Naive thymus-derived CD4-positive, alpha-beta T cell (primary cell): ENCODE measurements at regions of chr2 and their contacts with region 1.

Region 1: GRCh38 chr2:181715033-181715630 is 34.8 kb upstream of the NEUROD1 start:
- DNase-seq: peak; percentile 30 to 78 (median 64)
- ATAC-seq: peak; percentile 90
- H3K4me3 ChIP-seq: no peak overlapping the region
- H3K4me3 Mint-ChIP-seq: no peak overlapping the region
- H3K27ac ChIP-seq: no peak overlapping the region
- H3K27ac Mint-ChIP-seq: no peak overlapping the region
- H3K4me1 ChIP-seq: no peaks in the 10 kb centered on the region
- H3K4me1 Mint-ChIP-seq: no peaks in the 10 kb centered on the region
- H3K27me3 ChIP-seq: no peaks in the 10 kb centered on the region
- H3K27me3 Mint-ChIP-seq: peaks cover 0 to 11% (median 0%) of the 10 kb centered on the region in 5 donors

Region 2: GRCh38 chr2:180125245-180125962 is 1589.7 kb before region 1 on chr2:
- CTCF ChIA-PET with region 1: interaction called, 3 read pairs
- POLR2A ChIA-PET with region 1: no interaction called
- intact Hi-C with region 1: loop called (anchors 1 to 2 kb)
- DNase-seq: peak in 7 of 9 donors; percentile 18 to 43 (median 27)
- ATAC-seq: peak; percentile 86
- H3K4me3 ChIP-seq: no peak overlapping the region
- H3K4me3 Mint-ChIP-seq: peak overlapping the region in 4 of 10 donors; percentile 4 to 58 (median 24)
- H3K27ac ChIP-seq: no peak overlapping the region
- H3K27ac Mint-ChIP-seq: no peak overlapping the region
- H3K4me1 ChIP-seq: no peaks in the 10 kb centered on the region
- H3K4me1 Mint-ChIP-seq: peaks cover 0 to 6% (median 3%) of the 10 kb centered on the region in 7 donors
- H3K27me3 ChIP-seq: no peaks in the 10 kb centered on the region
- H3K27me3 Mint-ChIP-seq: peaks cover 0 to 26% (median 13%) of the 10 kb centered on the region in 5 donors

Region 3: DNA sequence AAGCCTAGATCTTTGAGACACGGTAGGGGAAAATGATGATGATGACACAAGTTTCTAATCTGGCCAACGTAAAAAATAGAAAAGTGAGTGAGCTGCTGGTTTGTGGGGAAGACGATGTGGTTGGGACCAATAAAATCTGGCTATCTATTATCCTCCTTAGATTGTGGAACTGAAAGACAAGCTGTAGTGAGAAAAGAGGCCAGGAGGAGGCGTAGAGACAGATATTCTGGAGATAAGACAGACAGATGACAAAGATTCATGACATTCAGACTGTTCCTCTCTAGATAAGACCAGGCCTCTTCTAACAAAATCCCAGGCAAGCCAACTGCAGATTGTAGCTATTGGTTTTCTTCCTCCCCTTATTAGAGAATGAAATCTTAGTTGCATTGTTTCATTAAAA is 1111.1 kb before region 1 on chr2:
- CTCF ChIA-PET with region 1: no interaction called
- POLR2A ChIA-PET with region 1: no interaction called
- intact Hi-C with region 1: loop called (anchors 5 to 10 kb)
- DNase-seq: no peak
- ATAC-seq: peak; percentile 34
- H3K4me3 ChIP-seq: no peak overlapping the region
- H3K4me3 Mint-ChIP-seq: no peak overlapping the region
- H3K27ac ChIP-seq: no peak overlapping the region
- H3K27ac Mint-ChIP-seq: no peak overlapping the region
- H3K4me1 ChIP-seq: no peaks in the 10 kb centered on the region
- H3K4me1 Mint-ChIP-seq: no peaks in the 10 kb centered on the region
- H3K27me3 ChIP-seq: no peaks in the 10 kb centered on the region
- H3K27me3 Mint-ChIP-seq: peaks cover 0 to 5% (median 0%) of the 10 kb centered on the region in 5 donors

Region 4: GRCh38 chr2:181077128-181077709 is 637.9 kb before region 1 on chr2:
- CTCF ChIA-PET with region 1: interaction called, 17 read pairs
- POLR2A ChIA-PET with region 1: no interaction called
- intact Hi-C with region 1: loop called (anchors 1 kb)
- DNase-seq: peak in 7 of 9 donors; percentile 49 to 76 (median 64)
- ATAC-seq: peak; percentile 90
- H3K4me3 ChIP-seq: no peak overlapping the region
- H3K4me3 Mint-ChIP-seq: no peak overlapping the region
- H3K27ac ChIP-seq: no peak overlapping the region
- H3K27ac Mint-ChIP-seq: no peak overlapping the region
- H3K4me1 ChIP-seq: no peaks in the 10 kb centered on the region
- H3K4me1 Mint-ChIP-seq: peaks cover 0 to 11% (median 0%) of the 10 kb centered on the region in 7 donors
- H3K27me3 ChIP-seq: no peaks in the 10 kb centered on the region
- H3K27me3 Mint-ChIP-seq: peaks cover 0 to 14% (median 0%) of the 10 kb centered on the region in 5 donors

Region 5: DNA sequence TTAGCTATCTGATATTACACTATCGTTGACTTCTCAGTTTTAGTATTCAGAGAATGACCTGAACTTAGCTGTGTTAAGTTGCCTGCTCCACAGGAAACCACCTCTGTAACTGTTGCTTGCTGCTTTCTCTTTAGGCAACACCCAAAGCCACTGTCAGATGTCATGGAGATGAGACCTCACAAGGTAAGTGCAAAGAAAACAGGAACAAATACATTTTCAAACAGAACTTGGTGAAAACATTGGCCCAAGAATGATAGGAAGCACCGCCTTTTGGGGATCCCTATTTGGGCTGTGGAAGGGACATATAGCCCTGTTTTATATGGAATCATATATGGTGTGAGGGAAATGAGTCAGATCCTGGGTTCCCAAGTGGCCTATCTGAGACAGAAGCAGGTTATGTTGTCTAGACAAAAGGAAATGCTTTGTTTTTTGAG is 591.3 kb before region 1 on chr2:
- CTCF ChIA-PET with region 1: no interaction called
- POLR2A ChIA-PET with region 1: no interaction called
- intact Hi-C with region 1: no loop called
- DNase-seq: peak in 8 of 9 donors; percentile 54 to 91 (median 83)
- ATAC-seq: peak; percentile 98
- H3K4me3 ChIP-seq: peak overlapping the region; percentile 37
- H3K4me3 Mint-ChIP-seq: peak overlapping the region; percentile 73 to 92 (median 82)
- H3K27ac ChIP-seq: peak overlapping the region; percentile 83
- H3K27ac Mint-ChIP-seq: peak overlapping the region; percentile 94 to 100 (median 98)
- H3K4me1 ChIP-seq: peaks cover 39 to 47% of the 10 kb centered on the region in 2 donors
- H3K4me1 Mint-ChIP-seq: peaks cover 27 to 81% (median 78%) of the 10 kb centered on the region in 7 donors
- H3K27me3 ChIP-seq: no peaks in the 10 kb centered on the region
- H3K27me3 Mint-ChIP-seq: no peaks in the 10 kb centered on the region

Region 6: GRCh38 chr2:181178823-181179412 is 536.2 kb before region 1 on chr2:
- CTCF ChIA-PET with region 1: no interaction called
- POLR2A ChIA-PET with region 1: no interaction called
- intact Hi-C with region 1: loop called in 1 of 2 experiments (anchors 10 kb)
- DNase-seq: peak in 6 of 9 donors; percentile 14 to 34 (median 30)
- ATAC-seq: peak; percentile 76
- H3K4me3 ChIP-seq: no peak overlapping the region
- H3K4me3 Mint-ChIP-seq: peak overlapping the region in 2 of 10 donors; percentile 19 to 25
- H3K27ac ChIP-seq: no peak overlapping the region
- H3K27ac Mint-ChIP-seq: peak overlapping the region in 8 of 9 donors; percentile 1 to 65 (median 44)
- H3K4me1 ChIP-seq: peaks cover 15 to 16% of the 10 kb centered on the region in 2 donors
- H3K4me1 Mint-ChIP-seq: peaks cover 7 to 58% (median 45%) of the 10 kb centered on the region in 7 donors
- H3K27me3 ChIP-seq: no peaks in the 10 kb centered on the region
- H3K27me3 Mint-ChIP-seq: no peaks in the 10 kb centered on the region

Region 7: GRCh38 chr2:181466661-181467576 is 248.2 kb before region 1 on chr2:
- CTCF ChIA-PET with region 1: interaction called, 4 read pairs
- POLR2A ChIA-PET with region 1: no interaction called
- intact Hi-C with region 1: loop called (anchors 2 to 10 kb)
- DNase-seq: peak; percentile 53 to 69 (median 61)
- ATAC-seq: peak; percentile 68
- H3K4me3 ChIP-seq: no peak overlapping the region
- H3K4me3 Mint-ChIP-seq: peak overlapping the region in 9 of 10 donors; percentile 49 to 76 (median 65)
- H3K27ac ChIP-seq: peak overlapping the region; percentile 65
- H3K27ac Mint-ChIP-seq: peak overlapping the region; percentile 59 to 95 (median 87)
- H3K4me1 ChIP-seq: peaks cover 53 to 71% of the 10 kb centered on the region in 2 donors
- H3K4me1 Mint-ChIP-seq: peaks cover 55 to 92% (median 90%) of the 10 kb centered on the region in 7 donors
- H3K27me3 ChIP-seq: no peaks in the 10 kb centered on the region
- H3K27me3 Mint-ChIP-seq: no peaks in the 10 kb centered on the region

Region 8: GRCh38 chr2:181573140-181573736 is 141.9 kb before region 1 on chr2:
- CTCF ChIA-PET with region 1: interaction called, 16 read pairs
- POLR2A ChIA-PET with region 1: no interaction called
- intact Hi-C with region 1: loop called (anchors 1 kb)
- DNase-seq: peak in 1 of 9 donors; percentile 13
- ATAC-seq: no peak
- H3K4me3 ChIP-seq: no peak overlapping the region
- H3K4me3 Mint-ChIP-seq: no peak overlapping the region
- H3K27ac ChIP-seq: no peak overlapping the region
- H3K27ac Mint-ChIP-seq: no peak overlapping the region
- H3K4me1 ChIP-seq: no peaks in the 10 kb centered on the region
- H3K4me1 Mint-ChIP-seq: peaks cover 0 to 3% (median 1%) of the 10 kb centered on the region in 7 donors
- H3K27me3 ChIP-seq: peaks cover 0 to 4% of the 10 kb centered on the region in 2 donors
- H3K27me3 Mint-ChIP-seq: peaks cover 0 to 25% (median 4%) of the 10 kb centered on the region in 5 donors